ENCODE measurements at regions of chr18 and their contacts with region 1.

Region 1: DNA sequence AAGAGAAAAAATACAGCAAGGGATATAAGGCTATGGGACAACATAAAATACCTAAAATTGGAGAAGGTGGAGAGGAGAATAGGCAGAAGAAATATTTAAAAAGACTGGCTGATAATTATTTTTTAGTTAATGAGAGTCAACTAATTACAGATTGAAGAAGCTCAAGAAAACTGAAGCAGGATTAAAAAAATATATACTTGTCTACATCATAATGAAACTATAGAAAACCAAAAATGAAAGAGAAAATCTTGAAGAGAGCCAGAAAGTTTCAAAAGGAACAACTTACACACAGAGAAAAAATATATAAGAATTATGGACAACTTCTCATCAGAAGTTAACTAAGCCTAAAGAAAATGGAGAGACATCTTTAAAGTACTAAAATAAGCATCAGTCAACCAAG is 62.9 kb upstream of the APCDD1 start:
- DNase-seq: no peak
- ATAC-seq: peak; percentile 89
- H3K4me3 ChIP-seq: peak overlapping the region; percentile 49; the same call in 1 of the 2 replicates
- H3K27ac ChIP-seq: peak overlapping the region; percentile 72
- H3K4me1 ChIP-seq: peaks cover 15% of the 10 kb centered on the region
- H3K27me3 ChIP-seq: no peaks in the 10 kb centered on the region
- CTCF ChIP-seq: no peak
- EP300 ChIP-seq: no peak
- POLR2A ChIP-seq: no peak
- RAD21 ChIP-seq: no peak

Region 2: DNA sequence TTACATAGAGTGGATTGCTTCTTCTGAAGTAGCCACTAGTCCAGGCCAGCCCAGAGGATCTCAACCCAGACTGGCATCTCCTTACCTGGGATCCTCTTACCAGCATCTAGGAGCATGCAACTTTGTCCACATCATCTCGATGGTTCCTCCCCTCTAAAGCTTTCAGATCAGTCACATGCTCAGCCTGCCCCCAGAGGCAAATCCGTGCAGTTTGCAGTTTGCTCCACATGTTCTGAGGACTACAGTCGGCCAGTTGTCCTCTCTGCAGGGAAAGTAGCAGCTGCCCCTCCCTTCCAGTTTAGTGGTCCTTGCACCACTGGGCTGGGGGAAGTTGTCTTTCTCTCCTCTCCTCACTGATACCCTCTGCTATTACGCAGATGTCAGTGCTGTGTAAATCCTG is 196.9 kb before region 1 on chr18:
- CTCF ChIA-PET with region 1: no interaction called
- POLR2A ChIA-PET with region 1: no interaction called
- RAD21 ChIA-PET with region 1: no interaction called
- SMC1A ChIA-PET with region 1: no interaction called
- in situ Hi-C with region 1: no loop called
- intact Hi-C with region 1: no loop called
- DNase-seq: no peak
- ATAC-seq: no peak
- H3K4me3 ChIP-seq: no peak overlapping the region
- H3K27ac ChIP-seq: no peak overlapping the region
- H3K4me1 ChIP-seq: no peaks in the 10 kb centered on the region
- H3K27me3 ChIP-seq: no peaks in the 10 kb centered on the region
- CTCF ChIP-seq: no peak
- EP300 ChIP-seq: no peak
- POLR2A ChIP-seq: no peak
- RAD21 ChIP-seq: no peak

Region 3: DNA sequence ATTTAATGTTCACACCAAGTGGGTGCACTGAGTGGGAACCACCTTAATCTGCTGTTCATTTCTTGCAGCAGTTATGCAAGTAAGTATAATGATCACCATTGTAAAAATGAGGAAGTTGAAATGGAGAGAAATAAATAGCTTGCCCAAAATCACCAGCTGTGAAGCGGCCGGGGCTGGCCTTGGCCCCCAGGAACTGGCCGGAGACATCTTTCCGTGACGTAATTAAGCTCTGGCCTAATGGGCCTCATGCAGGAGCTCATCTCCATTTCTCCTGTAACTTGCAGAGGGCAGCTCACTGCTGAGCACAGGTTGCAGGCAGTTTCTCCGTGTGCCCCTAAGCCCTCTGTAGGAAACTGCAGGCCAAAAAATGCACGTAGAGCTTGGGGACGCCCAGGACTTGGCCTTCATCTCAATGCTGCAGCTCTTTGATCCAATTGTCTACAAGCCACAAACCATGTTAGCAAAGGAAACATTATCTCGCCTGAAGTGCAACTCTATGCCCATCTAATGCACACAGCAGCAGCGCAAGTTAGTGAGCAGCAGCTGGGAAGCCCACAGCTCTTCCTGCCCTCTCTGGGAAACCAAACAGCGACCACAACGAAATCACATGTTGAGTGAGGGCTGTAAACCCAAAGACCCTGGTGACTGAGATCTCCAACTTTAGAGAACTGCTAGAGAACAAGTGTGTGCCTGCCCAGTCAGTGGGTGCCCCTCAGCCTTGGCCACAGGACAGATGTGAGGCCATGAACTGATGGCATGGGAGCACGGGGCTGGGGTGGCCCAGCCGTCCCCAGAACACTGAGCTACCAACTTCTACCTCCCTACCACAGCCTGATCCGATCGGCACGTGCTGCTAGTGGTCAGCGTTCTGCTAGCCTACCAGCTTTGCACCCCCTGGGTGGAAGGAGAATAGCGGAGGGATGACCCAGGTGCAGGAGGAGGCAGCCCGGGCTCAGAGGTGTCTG is 91.8 kb after region 1 on chr18:
- CTCF ChIA-PET with region 1: no interaction called
- POLR2A ChIA-PET with region 1: no interaction called
- RAD21 ChIA-PET with region 1: interaction called, 11 read pairs
- SMC1A ChIA-PET with region 1: interaction called, 6 read pairs
- in situ Hi-C with region 1: no loop called
- intact Hi-C with region 1: loop called (anchors 10 kb)
- DNase-seq: peak; percentile 73
- ATAC-seq: peak; percentile 90
- H3K4me3 ChIP-seq: peak overlapping the region; percentile 10; the same call in 1 of the 2 replicates
- H3K27ac ChIP-seq: peak overlapping the region; percentile 70
- H3K4me1 ChIP-seq: peaks cover 22% of the 10 kb centered on the region
- H3K27me3 ChIP-seq: no peaks in the 10 kb centered on the region; a peak in 1 of 4 replicates
- CTCF ChIP-seq: no peak
- EP300 ChIP-seq: peak; percentile 71 to 83; a peak in 3 of 4 replicates
- POLR2A ChIP-seq: no peak
- RAD21 ChIP-seq: no peak

Region 4: GRCh38 chr18:10771053-10771709 is 379.7 kb after region 1 on chr18:
- CTCF ChIA-PET with region 1: no interaction called
- POLR2A ChIA-PET with region 1: no interaction called
- RAD21 ChIA-PET with region 1: no interaction called
- SMC1A ChIA-PET with region 1: no interaction called
- in situ Hi-C with region 1: no loop called
- intact Hi-C with region 1: no loop called
- DNase-seq: peak; percentile 17
- ATAC-seq: peak; percentile 93
- H3K4me3 ChIP-seq: no peak overlapping the region
- H3K27ac ChIP-seq: peak overlapping the region; percentile 26; the same call in 1 of the 2 replicates
- H3K4me1 ChIP-seq: peaks cover 3% of the 10 kb centered on the region; the same call in 1 of the 2 replicates
- H3K27me3 ChIP-seq: no peaks in the 10 kb centered on the region
- CTCF ChIP-seq: no peak
- EP300 ChIP-seq: no peak
- POLR2A ChIP-seq: no peak
- RAD21 ChIP-seq: no peak

Region 5: DNA sequence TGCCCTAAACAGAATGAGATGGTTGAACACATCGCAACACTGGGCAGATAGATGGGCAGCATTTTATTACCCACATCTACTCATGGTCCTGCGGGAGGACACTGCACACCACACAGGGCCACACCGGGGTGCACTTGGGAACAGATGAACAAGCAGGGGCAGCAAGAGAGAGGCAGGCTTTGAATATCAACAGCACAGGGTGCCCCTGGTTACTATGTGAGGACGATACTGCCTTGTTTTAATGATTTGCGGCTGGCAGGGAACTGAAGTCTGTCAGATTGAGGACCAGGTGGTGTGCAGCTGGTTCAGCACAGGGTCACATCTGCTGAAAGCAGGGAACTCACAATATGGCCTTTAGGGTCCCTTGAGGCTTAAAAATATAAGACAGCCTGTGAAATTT is 562.2 kb after region 1 on chr18:
- CTCF ChIA-PET with region 1: no interaction called
- POLR2A ChIA-PET with region 1: no interaction called
- RAD21 ChIA-PET with region 1: no interaction called
- SMC1A ChIA-PET with region 1: no interaction called
- in situ Hi-C with region 1: no loop called
- intact Hi-C with region 1: no loop called
- DNase-seq: peak; percentile 84
- ATAC-seq: peak; percentile 65
- H3K4me3 ChIP-seq: peak overlapping the region; percentile 30; the same call in 1 of the 2 replicates
- H3K27ac ChIP-seq: peak overlapping the region; percentile 100
- H3K4me1 ChIP-seq: peaks cover 41% of the 10 kb centered on the region
- H3K27me3 ChIP-seq: no peaks in the 10 kb centered on the region
- CTCF ChIP-seq: no peak; a peak in 1 of 6 replicates
- EP300 ChIP-seq: peak; percentile 55 to 69; a peak in 3 of 4 replicates
- POLR2A ChIP-seq: peak; percentile 80
- RAD21 ChIP-seq: peak; percentile 21; the same call in 1 of the 2 replicates